ENCODE measurements at regions of chr2 and their contacts with region 1.

Region 1: GRCh38 chr2:143259368-143259958 is 130.2 kb downstream of the ARHGAP15 start:
- DNase-seq: peak; percentile 39 to 90 (median 64)
- ATAC-seq: peak; percentile 22 to 52 (median 30)
- H3K4me3 ChIP-seq: no peak overlapping the region
- H3K4me3 Mint-ChIP-seq: peak overlapping the region; percentile 58 to 71 (median 62)
- H3K27ac ChIP-seq: peak overlapping the region; percentile 72
- H3K27ac Mint-ChIP-seq: peak overlapping the region; percentile 90 to 91
- H3K4me1 ChIP-seq: peaks cover 41 to 62% of the 10 kb centered on the region in 2 experiments
- H3K4me1 Mint-ChIP-seq: peaks cover 81 to 82% (median 81%) of the 10 kb centered on the region in 3 donors
- H3K27me3 ChIP-seq: no peaks in the 10 kb centered on the region
- H3K27me3 Mint-ChIP-seq: no peaks in the 10 kb centered on the region

Region 2: DNA sequence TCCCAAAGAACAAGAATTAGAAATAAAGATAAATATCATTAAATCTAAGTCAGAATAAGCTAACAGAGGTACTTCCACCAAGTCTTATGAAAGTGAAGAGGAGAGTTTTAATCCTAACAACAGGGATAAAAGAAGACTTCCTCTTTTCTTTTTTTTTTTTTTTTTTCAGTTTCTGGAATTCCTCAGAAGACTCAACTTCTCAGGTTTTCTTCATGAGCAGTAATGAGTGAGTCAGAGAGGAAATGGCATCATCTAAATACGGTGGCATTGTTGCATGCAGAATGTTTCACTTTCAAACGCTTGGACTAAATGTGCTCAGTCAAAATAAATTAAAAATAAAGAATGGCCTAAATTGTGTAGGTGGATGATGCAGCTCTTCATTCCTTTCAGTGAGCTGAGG is 175.8 kb before region 1 on chr2:
- CTCF ChIA-PET with region 1: interaction called in 1 of 2 experiments, 5 read pairs
- POLR2A ChIA-PET with region 1: interaction called in 1 of 2 experiments, 10 read pairs
- DNase-seq: peak in 1 of 35 experiments; percentile 27
- ATAC-seq: peak in 3 of 4 experiments; percentile 37 to 66 (median 51)
- H3K4me3 ChIP-seq: no peak overlapping the region
- H3K4me3 Mint-ChIP-seq: peak overlapping the region in 1 of 3 donors; percentile 10
- H3K27ac ChIP-seq: no peak overlapping the region
- H3K27ac Mint-ChIP-seq: peak overlapping the region in 1 of 2 donors; percentile 25
- H3K4me1 ChIP-seq: no peaks in the 10 kb centered on the region
- H3K4me1 Mint-ChIP-seq: peaks cover 4 to 25% (median 18%) of the 10 kb centered on the region in 3 donors
- H3K27me3 ChIP-seq: no peaks in the 10 kb centered on the region
- H3K27me3 Mint-ChIP-seq: no peaks in the 10 kb centered on the region

Region 3: GRCh38 chr2:143162123-143162837 is 97.2 kb before region 1 on chr2:
- CTCF ChIA-PET with region 1: interaction called, 34 to 99 read pairs
- POLR2A ChIA-PET with region 1: interaction called, 3 to 6 read pairs
- DNase-seq: peak in 34 of 35 experiments; percentile 37 to 83 (median 61)
- ATAC-seq: peak; percentile 90 to 99 (median 94)
- H3K4me3 ChIP-seq: no peak overlapping the region
- H3K4me3 Mint-ChIP-seq: no peak overlapping the region
- H3K27ac ChIP-seq: peak overlapping the region; percentile 3
- H3K27ac Mint-ChIP-seq: peak overlapping the region; percentile 82 to 90
- H3K4me1 ChIP-seq: peaks cover 12 to 28% of the 10 kb centered on the region in 2 experiments
- H3K4me1 Mint-ChIP-seq: peaks cover 89 to 95% (median 90%) of the 10 kb centered on the region in 3 donors
- H3K27me3 ChIP-seq: no peaks in the 10 kb centered on the region
- H3K27me3 Mint-ChIP-seq: no peaks in the 10 kb centered on the region

Region 4: GRCh38 chr2:143205106-143205764 is 54.2 kb before region 1 on chr2:
- CTCF ChIA-PET with region 1: interaction called, 27 to 84 read pairs
- POLR2A ChIA-PET with region 1: no interaction called
- DNase-seq: peak in 1 of 35 experiments; percentile 66
- ATAC-seq: peak; percentile 77 to 83 (median 82)
- H3K4me3 ChIP-seq: no peak overlapping the region
- H3K4me3 Mint-ChIP-seq: peak overlapping the region in 1 of 3 donors; percentile 2
- H3K27ac ChIP-seq: peak overlapping the region; percentile 53
- H3K27ac Mint-ChIP-seq: peak overlapping the region; percentile 52 to 91
- H3K4me1 ChIP-seq: peaks cover 10 to 14% of the 10 kb centered on the region in 2 experiments
- H3K4me1 Mint-ChIP-seq: peaks cover 69 to 76% (median 69%) of the 10 kb centered on the region in 3 donors
- H3K27me3 ChIP-seq: no peaks in the 10 kb centered on the region
- H3K27me3 Mint-ChIP-seq: no peaks in the 10 kb centered on the region

Region 5: GRCh38 chr2:143241403-143242088 is 17.9 kb before region 1 on chr2:
- CTCF ChIA-PET with region 1: interaction called, 3 to 37 read pairs
- POLR2A ChIA-PET with region 1: no interaction called
- DNase-seq: no peak
- ATAC-seq: no peak
- H3K4me3 ChIP-seq: no peak overlapping the region
- H3K4me3 Mint-ChIP-seq: no peak overlapping the region
- H3K27ac ChIP-seq: no peak overlapping the region
- H3K27ac Mint-ChIP-seq: peak overlapping the region; percentile 52 to 64
- H3K4me1 ChIP-seq: peaks cover 14% of the 10 kb centered on the region in 2 experiments
- H3K4me1 Mint-ChIP-seq: peaks cover 28 to 34% (median 32%) of the 10 kb centered on the region in 3 donors
- H3K27me3 ChIP-seq: no peaks in the 10 kb centered on the region
- H3K27me3 Mint-ChIP-seq: no peaks in the 10 kb centered on the region

Region 6: DNA sequence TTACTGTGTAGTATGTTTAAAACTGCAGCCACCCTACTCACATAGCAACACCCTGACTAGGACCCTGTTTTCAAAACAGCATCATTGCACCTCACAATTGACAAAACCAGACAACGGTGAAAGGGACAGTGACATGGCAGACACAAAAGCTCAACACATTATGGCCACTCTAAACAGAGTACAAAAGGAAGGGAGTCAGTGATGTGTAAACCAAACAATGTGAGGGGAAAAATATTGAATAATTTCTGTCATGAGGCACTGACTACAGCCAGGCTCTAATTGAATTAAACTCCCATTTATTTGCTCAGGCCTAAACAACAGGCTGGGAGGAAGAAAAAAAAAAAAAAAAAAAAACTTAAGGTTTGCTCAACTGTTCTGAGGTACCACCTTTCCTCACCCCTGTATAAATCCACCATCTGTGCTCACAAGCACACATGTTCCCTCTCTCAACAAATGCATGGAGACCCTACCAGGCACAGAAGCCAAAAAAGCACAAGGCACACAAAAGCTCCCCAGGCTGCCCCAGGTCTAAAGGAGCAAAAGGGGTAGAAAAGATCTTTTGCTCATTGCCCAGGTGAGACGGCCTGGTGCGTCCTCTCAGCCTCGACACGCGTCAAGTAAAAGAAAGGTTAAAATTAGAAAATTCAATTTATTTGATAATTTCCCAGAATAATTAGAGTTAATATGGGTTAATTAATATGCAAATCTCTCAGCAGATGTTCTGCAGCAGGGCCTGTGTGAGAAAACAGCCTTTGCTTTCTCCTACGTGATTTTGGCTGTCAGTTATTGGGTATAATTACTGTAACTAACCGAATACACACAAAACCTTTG is 1179.6 kb after region 1 on chr2:
- CTCF ChIA-PET with region 1: no interaction called
- POLR2A ChIA-PET with region 1: no interaction called
- DNase-seq: no peak
- ATAC-seq: no peak
- H3K4me3 ChIP-seq: no peak overlapping the region
- H3K4me3 Mint-ChIP-seq: no peak overlapping the region
- H3K27ac ChIP-seq: no peak overlapping the region
- H3K27ac Mint-ChIP-seq: no peak overlapping the region
- H3K4me1 ChIP-seq: no peaks in the 10 kb centered on the region
- H3K4me1 Mint-ChIP-seq: peaks cover 0 to 18% (median 0%) of the 10 kb centered on the region in 3 donors
- H3K27me3 ChIP-seq: no peaks in the 10 kb centered on the region
- H3K27me3 Mint-ChIP-seq: no peaks in the 10 kb centered on the region